ENCODE measurements at regions of chr10 and their contacts with region 1.

Region 1: GRCh38 chr10:124418726-124419501 is at the start of gene OAT:
- DNase-seq: peak; percentile 98
- ATAC-seq: peak; percentile 97
- H3K4me3 ChIP-seq: peak within 1 kb of the TSS; percentile 26 to 83 (median 64)
- H3K4me3 Mint-ChIP-seq: peak within 1 kb of the TSS; percentile 85
- H3K27ac ChIP-seq: peak within 1 kb of the TSS; percentile 51 to 80
- H3K27ac Mint-ChIP-seq: peak within 1 kb of the TSS; percentile 84
- H3K4me1 ChIP-seq: peaks cover 10 to 13% of the 10 kb centered on the region in 2 donors
- H3K4me1 Mint-ChIP-seq: peaks cover 16% of the 10 kb centered on the region
- H3K27me3 ChIP-seq: peaks cover 0 to 23% (median 5%) of the 10 kb centered on the region in 4 experiments
- H3K27me3 Mint-ChIP-seq: peaks cover 16% of the 10 kb centered on the region
- CTCF ChIP-seq: no peak
- total RNA-seq, gene OAT: 16.9 and 20.1 TPM in 2 replicates

Region 2: DNA sequence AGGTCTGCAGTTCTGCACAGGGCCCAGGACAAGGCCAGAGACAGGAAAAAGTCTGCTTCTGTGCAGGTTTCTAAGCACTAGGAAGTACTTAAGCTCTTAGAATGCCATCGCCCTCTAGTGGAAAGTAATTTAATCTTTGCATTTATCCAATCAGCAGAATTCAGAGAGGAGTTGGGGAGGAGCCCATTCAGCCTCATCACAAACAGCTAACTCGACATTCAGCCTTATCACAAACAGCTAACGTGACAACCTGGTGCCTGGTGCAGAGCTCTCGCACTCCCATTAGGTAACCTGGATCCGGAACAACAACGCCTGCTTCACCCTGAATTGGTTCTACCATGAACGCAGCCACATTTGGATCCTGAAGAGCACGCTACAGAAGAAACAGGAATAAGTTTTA is 15.4 kb before region 1 on chr10:
- CTCF ChIA-PET with region 1: interaction called, 8 read pairs
- POLR2A ChIA-PET with region 1: interaction called, 18 read pairs
- intact Hi-C with region 1: loop called (anchors 1 kb)
- DNase-seq: peak; percentile 83
- ATAC-seq: peak; percentile 99
- H3K4me3 ChIP-seq: no peak overlapping the region
- H3K4me3 Mint-ChIP-seq: no peak overlapping the region
- H3K27ac ChIP-seq: no peak overlapping the region
- H3K27ac Mint-ChIP-seq: peak overlapping the region; percentile 66
- H3K4me1 ChIP-seq: peaks cover 5 to 9% of the 10 kb centered on the region in 2 donors
- H3K4me1 Mint-ChIP-seq: peaks cover 9% of the 10 kb centered on the region
- H3K27me3 ChIP-seq: no peaks in the 10 kb centered on the region
- H3K27me3 Mint-ChIP-seq: no peaks in the 10 kb centered on the region
- CTCF ChIP-seq: peak; percentile 74

Region 3: DNA sequence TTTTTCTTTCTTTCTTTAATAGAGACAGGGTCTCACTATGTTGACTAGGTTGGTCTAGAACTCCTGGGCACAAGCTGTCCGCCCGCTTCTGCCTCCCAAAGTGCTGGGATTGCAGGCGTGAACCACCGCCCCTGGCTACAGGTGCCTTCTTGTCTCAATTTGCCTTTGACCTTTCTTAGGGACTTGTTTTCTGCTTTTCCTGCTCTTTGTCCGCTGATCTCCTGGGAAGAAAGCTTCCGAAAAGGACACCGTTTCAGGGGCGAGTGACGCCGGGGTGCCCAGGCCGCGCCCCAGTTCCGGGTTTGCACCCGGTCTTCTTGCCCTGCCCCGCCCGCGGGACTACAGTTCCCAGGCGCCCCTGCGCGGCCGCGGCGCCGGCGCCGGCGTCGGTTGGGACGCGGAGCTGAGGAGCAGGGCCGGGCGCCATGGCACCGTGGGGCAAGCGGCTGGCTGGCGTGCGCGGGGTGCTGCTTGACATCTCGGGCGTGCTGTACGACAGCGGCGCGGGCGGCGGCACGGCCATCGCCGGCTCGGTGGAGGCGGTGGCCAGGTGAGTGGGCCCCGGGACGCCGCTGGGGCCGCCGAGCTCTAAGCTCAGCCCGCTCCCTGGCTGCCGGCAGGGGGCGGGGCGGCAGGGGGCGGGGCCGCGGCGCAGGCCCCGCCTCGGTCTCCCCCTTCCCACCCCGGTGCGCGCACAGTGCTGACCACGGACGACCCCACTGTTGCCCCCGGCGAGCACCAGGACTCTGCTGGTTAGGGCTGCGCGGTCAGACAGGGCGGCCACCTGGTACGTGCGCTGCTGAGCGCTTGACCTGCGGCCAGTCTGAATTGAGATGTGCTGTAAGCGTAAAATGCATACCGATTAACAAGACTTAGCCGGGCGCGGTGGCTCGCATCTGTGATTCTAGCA is 42.8 kb after region 1 on chr10 and contains the start of gene LHPP:
- CTCF ChIA-PET with region 1: interaction called, 4 read pairs
- POLR2A ChIA-PET with region 1: interaction called, 3 read pairs
- intact Hi-C with region 1: loop called (anchors 1 kb)
- DNase-seq: peak; percentile 93
- ATAC-seq: peak; percentile 91
- H3K4me3 ChIP-seq: peak within 1 kb of the TSS in 4 of 5 experiments; percentile 43 to 71 (median 65)
- H3K4me3 Mint-ChIP-seq: peak within 1 kb of the TSS; percentile 97
- H3K27ac ChIP-seq: peak within 1 kb of the TSS; percentile 54 to 71
- H3K27ac Mint-ChIP-seq: peak within 1 kb of the TSS; percentile 98
- H3K4me1 ChIP-seq: peaks cover 23 to 35% of the 10 kb centered on the region in 2 donors
- H3K4me1 Mint-ChIP-seq: peaks cover 30% of the 10 kb centered on the region
- H3K27me3 ChIP-seq: peaks cover 0 to 3% (median under 1%) of the 10 kb centered on the region in 4 experiments
- H3K27me3 Mint-ChIP-seq: peaks cover 7% of the 10 kb centered on the region
- CTCF ChIP-seq: peak; percentile 35
- total RNA-seq, gene LHPP: 82.4 and 83.5 TPM in 2 replicates

Region 4: GRCh38 chr10:124791378-124792348 is 372.7 kb after region 1 on chr10 and contains the start of gene EEF1AKMT2:
- CTCF ChIA-PET with region 1: no interaction called
- POLR2A ChIA-PET with region 1: no interaction called
- intact Hi-C with region 1: loop called (anchors 2 kb)
- DNase-seq: peak; percentile 91
- ATAC-seq: peak; percentile 97
- H3K4me3 ChIP-seq: peak within 1 kb of the TSS; percentile 75 to 98 (median 95)
- H3K4me3 Mint-ChIP-seq: peak within 1 kb of the TSS; percentile 100
- H3K27ac ChIP-seq: peak within 1 kb of the TSS; percentile 68 to 79
- H3K27ac Mint-ChIP-seq: peak within 1 kb of the TSS; percentile 99
- H3K4me1 ChIP-seq: peaks cover 4 to 10% of the 10 kb centered on the region in 2 donors
- H3K4me1 Mint-ChIP-seq: peaks cover 17% of the 10 kb centered on the region
- H3K27me3 ChIP-seq: no peaks in the 10 kb centered on the region
- H3K27me3 Mint-ChIP-seq: no peaks in the 10 kb centered on the region
- CTCF ChIP-seq: peak; percentile 18
- total RNA-seq, gene EEF1AKMT2: 15.0 and 15.4 TPM in 2 replicates

Region 5: GRCh38 chr10:124802313-124802675 is 383.4 kb after region 1 on chr10:
- CTCF ChIA-PET with region 1: no interaction called
- POLR2A ChIA-PET with region 1: no interaction called
- intact Hi-C with region 1: loop called (anchors 1 kb)
- DNase-seq: peak; percentile 65
- ATAC-seq: peak; percentile 14
- H3K4me3 ChIP-seq: peak overlapping the region; percentile 69 to 97 (median 81)
- H3K4me3 Mint-ChIP-seq: peak overlapping the region; percentile 94
- H3K27ac ChIP-seq: peak overlapping the region; percentile 71 to 89
- H3K27ac Mint-ChIP-seq: peak overlapping the region; percentile 93
- H3K4me1 ChIP-seq: peaks cover 5 to 13% of the 10 kb centered on the region in 2 donors
- H3K4me1 Mint-ChIP-seq: peaks cover 17% of the 10 kb centered on the region
- H3K27me3 ChIP-seq: peaks cover 0 to 3% (median 0%) of the 10 kb centered on the region in 4 experiments
- H3K27me3 Mint-ChIP-seq: peaks cover 4% of the 10 kb centered on the region
- CTCF ChIP-seq: no peak

Region 6: DNA sequence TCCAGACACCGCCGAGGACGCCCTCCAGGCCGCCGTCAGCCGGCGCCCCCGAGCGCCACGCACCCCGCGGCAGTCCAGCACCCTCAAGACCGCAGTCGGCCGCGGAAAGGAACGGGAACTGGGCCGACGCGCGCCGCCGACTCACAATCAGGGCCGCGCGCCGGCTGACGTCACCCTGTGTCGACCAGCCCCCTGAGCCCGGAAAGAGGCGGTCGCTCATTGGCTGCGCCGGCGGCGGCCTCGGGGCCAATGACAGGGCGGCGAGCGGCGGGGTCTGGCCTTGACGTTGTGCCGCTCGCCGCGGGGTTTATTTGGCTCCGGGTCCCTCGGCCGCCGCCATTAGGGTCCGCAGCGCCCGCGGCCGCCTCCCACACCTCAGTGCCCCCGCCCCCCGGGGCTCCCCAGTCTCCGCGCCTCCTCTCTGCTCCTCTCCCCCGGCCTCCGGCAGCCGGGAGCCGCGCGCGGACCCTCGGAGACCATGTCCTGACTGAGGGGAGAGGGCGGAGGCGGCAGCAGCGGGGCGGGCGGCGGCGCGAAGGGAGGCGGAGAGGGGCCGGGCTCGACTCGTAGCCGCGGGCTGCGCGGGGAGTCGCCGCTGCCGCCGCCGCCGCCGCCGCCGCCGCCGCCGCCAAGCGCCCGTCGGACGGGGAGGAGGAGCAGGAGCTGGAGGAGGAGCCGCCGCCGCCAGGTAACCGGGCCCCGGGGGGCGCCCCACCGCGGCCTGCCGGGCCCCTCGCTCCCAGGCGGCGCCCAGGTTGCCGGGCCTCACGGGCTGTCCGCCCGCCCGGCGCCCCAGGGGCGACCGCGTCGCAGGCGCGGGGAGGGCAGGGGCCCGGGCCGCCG is 497.9 kb after region 1 on chr10:
- CTCF ChIA-PET with region 1: no interaction called
- POLR2A ChIA-PET with region 1: no interaction called
- intact Hi-C with region 1: loop called (anchors 2 kb)
- DNase-seq: peak; percentile 98
- ATAC-seq: peak; percentile 89
- H3K4me3 ChIP-seq: peak overlapping the region; percentile 63 to 87 (median 79)
- H3K4me3 Mint-ChIP-seq: peak overlapping the region; percentile 90
- H3K27ac ChIP-seq: peak overlapping the region; percentile 81 to 87
- H3K27ac Mint-ChIP-seq: peak overlapping the region; percentile 90
- H3K4me1 ChIP-seq: peaks cover 18 to 20% of the 10 kb centered on the region in 2 donors
- H3K4me1 Mint-ChIP-seq: peaks cover 37% of the 10 kb centered on the region
- H3K27me3 ChIP-seq: peaks cover 0 to 5% (median 3%) of the 10 kb centered on the region in 4 experiments
- H3K27me3 Mint-ChIP-seq: peaks cover 9% of the 10 kb centered on the region
- CTCF ChIP-seq: no peak